CD4-positive, alpha-beta T cell (primary cell): ENCODE measurements at regions of chr6 and their contacts with region 1.

Region 1: DNA sequence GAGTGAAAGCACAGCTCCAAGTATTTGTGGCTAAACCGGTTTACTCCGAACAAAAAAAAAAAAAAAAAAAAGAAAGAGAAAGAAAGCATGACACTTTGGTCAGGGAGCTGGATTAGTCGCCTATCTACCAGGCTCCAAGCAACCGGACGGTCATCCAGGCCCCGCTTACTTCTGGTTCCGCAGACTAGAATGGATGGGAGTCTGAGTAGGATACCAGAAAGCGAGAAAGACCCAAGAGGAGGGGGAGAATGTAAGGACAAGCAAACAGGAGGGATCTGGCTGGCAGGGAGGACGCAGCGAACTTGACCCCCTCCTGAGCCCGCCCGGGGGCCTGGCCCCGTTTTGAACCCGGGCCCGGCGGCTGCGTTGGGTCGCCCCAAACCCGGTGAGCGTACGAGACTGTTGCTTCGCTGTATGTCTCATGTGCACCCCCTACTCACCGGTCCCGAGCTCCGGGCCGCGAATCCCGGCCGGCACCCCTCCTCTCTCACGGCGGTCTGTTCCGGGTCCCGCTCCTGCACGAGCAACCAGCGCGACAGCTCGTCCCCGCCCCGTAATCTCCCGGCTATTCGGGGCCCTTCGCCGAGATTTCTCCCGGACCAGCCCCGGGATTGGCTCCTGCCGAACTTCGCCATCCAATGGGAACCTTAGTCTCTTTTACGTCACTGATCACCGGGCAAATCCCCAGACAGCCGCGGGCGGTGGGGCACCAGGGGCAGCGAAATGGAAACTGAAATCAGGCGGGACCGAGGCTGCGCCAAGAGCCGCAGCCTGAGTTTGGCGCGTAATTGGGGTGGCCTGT is at the start of gene TRIM26:
- DNase-seq: peak; percentile 92 to 99 (median 95)
- ATAC-seq: peak; percentile 86
- H3K4me3 ChIP-seq: peak within 1 kb of the TSS; percentile 90
- H3K4me3 Mint-ChIP-seq: peak within 1 kb of the TSS; percentile 96
- H3K27ac ChIP-seq: peak within 1 kb of the TSS; percentile 98 to 99
- H3K27ac Mint-ChIP-seq: peak within 1 kb of the TSS; percentile 100
- H3K4me1 ChIP-seq: peaks cover 39% of the 10 kb centered on the region
- H3K4me1 Mint-ChIP-seq: peaks cover 55% of the 10 kb centered on the region
- H3K27me3 ChIP-seq: no peaks in the 10 kb centered on the region
- H3K27me3 Mint-ChIP-seq: no peaks in the 10 kb centered on the region
- CTCF ChIP-seq: no peak
- total RNA-seq, gene TRIM26: 42.1 to 44.1 TPM

Region 2: GRCh38 chr6:29926413-29927274 is 286.4 kb before region 1 on chr6:
- CTCF ChIA-PET with region 1: no interaction called
- POLR2A ChIA-PET with region 1: interaction called, 3 read pairs
- intact Hi-C with region 1: loop called in 1 of 2 experiments (anchors 10 kb)
- DNase-seq: peak; percentile 59 to 96 (median 85)
- ATAC-seq: peak; percentile 93
- H3K4me3 ChIP-seq: peak overlapping the region; percentile 97
- H3K4me3 Mint-ChIP-seq: peak overlapping the region; percentile 98
- H3K27ac ChIP-seq: peak overlapping the region; percentile 93 to 99
- H3K27ac Mint-ChIP-seq: peak overlapping the region; percentile 92
- H3K4me1 ChIP-seq: peaks cover 24% of the 10 kb centered on the region
- H3K4me1 Mint-ChIP-seq: peaks cover 26% of the 10 kb centered on the region
- H3K27me3 ChIP-seq: no peaks in the 10 kb centered on the region
- H3K27me3 Mint-ChIP-seq: no peaks in the 10 kb centered on the region
- CTCF ChIP-seq: no peak

Region 3: GRCh38 chr6:30196376-30196775 is 16.7 kb before region 1 on chr6:
- CTCF ChIA-PET with region 1: no interaction called
- POLR2A ChIA-PET with region 1: interaction called, 10 read pairs
- intact Hi-C with region 1: no loop called
- DNase-seq: no peak
- ATAC-seq: no peak
- H3K4me3 ChIP-seq: no peak overlapping the region
- H3K4me3 Mint-ChIP-seq: no peak overlapping the region
- H3K27ac ChIP-seq: no peak overlapping the region
- H3K27ac Mint-ChIP-seq: no peak overlapping the region
- H3K4me1 ChIP-seq: peaks cover 4% of the 10 kb centered on the region
- H3K4me1 Mint-ChIP-seq: peaks cover 14% of the 10 kb centered on the region
- H3K27me3 ChIP-seq: no peaks in the 10 kb centered on the region
- H3K27me3 Mint-ChIP-seq: no peaks in the 10 kb centered on the region
- CTCF ChIP-seq: no peak

Region 4: DNA sequence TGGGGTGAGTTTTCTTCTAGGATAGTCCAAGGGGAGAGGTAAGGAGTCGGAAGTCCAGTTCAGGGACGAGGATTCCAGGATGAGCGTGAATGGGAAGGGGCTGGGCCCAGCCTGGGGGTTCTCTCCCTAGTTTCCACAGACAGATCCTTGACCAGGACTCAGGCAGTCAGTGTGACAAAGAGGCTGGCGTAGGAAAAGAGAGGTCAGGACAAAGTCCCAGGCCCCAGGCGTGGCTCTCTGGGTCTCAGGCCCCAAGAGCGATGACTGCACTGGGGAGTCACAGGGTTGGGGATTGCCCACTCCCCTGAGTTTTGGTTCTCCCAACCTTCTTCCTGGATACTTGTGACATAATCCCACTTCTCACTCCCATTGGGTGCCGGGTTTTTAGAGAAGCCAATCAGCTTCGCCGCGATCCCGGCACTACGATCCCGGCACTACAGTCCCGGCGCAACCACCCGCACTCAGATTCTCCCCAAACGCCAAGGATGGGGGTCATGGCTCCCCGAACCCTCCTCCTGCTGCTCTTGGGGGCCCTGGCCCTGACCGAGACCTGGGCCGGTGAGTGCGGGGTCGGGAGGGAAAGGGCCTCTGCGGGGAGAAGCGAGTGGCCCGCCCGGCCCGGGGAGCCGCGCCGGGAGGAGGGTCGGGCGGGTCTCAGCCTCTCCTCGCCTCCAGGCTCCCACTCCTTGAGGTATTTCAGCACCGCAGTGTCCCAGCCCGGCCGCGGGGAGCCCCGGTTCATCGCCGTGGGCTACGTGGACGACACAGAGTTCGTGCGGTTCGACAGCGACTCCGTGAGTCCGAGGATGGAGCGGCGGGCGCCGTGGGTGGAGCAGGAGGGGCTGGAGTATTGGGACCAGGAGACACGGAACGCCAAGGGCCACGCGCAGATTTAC is 46.3 kb after region 1 on chr6:
- CTCF ChIA-PET with region 1: no interaction called
- POLR2A ChIA-PET with region 1: interaction called, 11 read pairs
- intact Hi-C with region 1: loop called (anchors 2 kb)
- DNase-seq: peak; percentile 36 to 92 (median 50)
- ATAC-seq: peak; percentile 81
- H3K4me3 ChIP-seq: peak overlapping the region; percentile 84
- H3K4me3 Mint-ChIP-seq: peak overlapping the region; percentile 96
- H3K27ac ChIP-seq: peak overlapping the region; percentile 41
- H3K27ac Mint-ChIP-seq: peak overlapping the region; percentile 85
- H3K4me1 ChIP-seq: peaks cover 16% of the 10 kb centered on the region
- H3K4me1 Mint-ChIP-seq: peaks cover 9% of the 10 kb centered on the region
- H3K27me3 ChIP-seq: no peaks in the 10 kb centered on the region
- H3K27me3 Mint-ChIP-seq: no peaks in the 10 kb centered on the region
- CTCF ChIP-seq: peak; percentile 38

Region 5: GRCh38 chr6:30344868-30345671 is 132.0 kb after region 1 on chr6 and contains the start of gene RPP21:
- CTCF ChIA-PET with region 1: no interaction called
- POLR2A ChIA-PET with region 1: interaction called, 6 read pairs
- intact Hi-C with region 1: loop called in 1 of 2 experiments (anchors 1 kb)
- DNase-seq: peak; percentile 74 to 92 (median 85)
- ATAC-seq: peak; percentile 99
- H3K4me3 ChIP-seq: peak within 1 kb of the TSS; percentile 91
- H3K4me3 Mint-ChIP-seq: peak within 1 kb of the TSS; percentile 96
- H3K27ac ChIP-seq: peak within 1 kb of the TSS; percentile 88 to 90
- H3K27ac Mint-ChIP-seq: peak within 1 kb of the TSS; percentile 90
- H3K4me1 ChIP-seq: peaks cover 22% of the 10 kb centered on the region
- H3K4me1 Mint-ChIP-seq: peaks cover 26% of the 10 kb centered on the region
- H3K27me3 ChIP-seq: no peaks in the 10 kb centered on the region
- H3K27me3 Mint-ChIP-seq: no peaks in the 10 kb centered on the region
- CTCF ChIP-seq: no peak
- total RNA-seq, gene RPP21: 42.8 to 51.9 TPM

Region 6: DNA sequence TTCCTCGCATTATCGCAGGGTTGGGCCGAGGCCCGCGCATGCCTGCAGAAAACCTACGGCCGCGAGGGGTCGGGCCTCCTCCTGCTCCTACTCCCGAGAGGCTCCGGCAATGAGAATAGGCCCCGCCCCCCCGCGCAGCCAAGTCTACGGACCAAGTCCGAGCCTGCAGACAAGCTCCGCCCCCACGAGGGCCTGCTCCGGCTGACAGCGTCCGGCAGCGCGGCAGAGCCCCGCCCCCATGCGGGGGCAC is 1982.5 kb after region 1 on chr6:
- CTCF ChIA-PET with region 1: no interaction called
- POLR2A ChIA-PET with region 1: no interaction called
- intact Hi-C with region 1: loop called in 1 of 2 experiments (anchors 10 kb)
- DNase-seq: peak in 13 of 14 experiments; percentile 97 to 100 (median 100)
- ATAC-seq: peak; percentile 82
- H3K4me3 ChIP-seq: peak overlapping the region; percentile 100
- H3K4me3 Mint-ChIP-seq: peak overlapping the region; percentile 99
- H3K27ac ChIP-seq: peak overlapping the region; percentile 87 to 100
- H3K27ac Mint-ChIP-seq: peak overlapping the region; percentile 96
- H3K4me1 ChIP-seq: peaks cover 52% of the 10 kb centered on the region
- H3K4me1 Mint-ChIP-seq: peaks cover 48% of the 10 kb centered on the region
- H3K27me3 ChIP-seq: no peaks in the 10 kb centered on the region
- H3K27me3 Mint-ChIP-seq: no peaks in the 10 kb centered on the region
- CTCF ChIP-seq: peak; percentile 31